MCF 10A (cell line): ENCODE measurements at regions of chr19 and their contacts with region 1.

Region 1: GRCh38 chr19:47619763-47620162 is 10.8 kb downstream of the BICRA start:
- DNase-seq: no peak
- H3K4me3 Mint-ChIP-seq: no peak overlapping the region
- H3K27ac Mint-ChIP-seq: no peak overlapping the region
- H3K4me1 Mint-ChIP-seq: peaks cover 13% of the 10 kb centered on the region
- H3K27me3 Mint-ChIP-seq: no peaks in the 10 kb centered on the region
- CTCF ChIP-seq: no peak

Region 2: GRCh38 chr19:47600246-47601179 is 19.2 kb before region 1 on chr19:
- CTCF ChIA-PET with region 1: no interaction called
- POLR2A ChIA-PET with region 1: interaction called, 10 read pairs
- intact Hi-C with region 1: no loop called
- DNase-seq: peak; percentile 100
- H3K4me3 Mint-ChIP-seq: peak overlapping the region; percentile 97
- H3K27ac Mint-ChIP-seq: peak overlapping the region; percentile 97
- H3K4me1 Mint-ChIP-seq: peaks cover 30% of the 10 kb centered on the region
- H3K27me3 Mint-ChIP-seq: no peaks in the 10 kb centered on the region
- CTCF ChIP-seq: no peak

Region 3: DNA sequence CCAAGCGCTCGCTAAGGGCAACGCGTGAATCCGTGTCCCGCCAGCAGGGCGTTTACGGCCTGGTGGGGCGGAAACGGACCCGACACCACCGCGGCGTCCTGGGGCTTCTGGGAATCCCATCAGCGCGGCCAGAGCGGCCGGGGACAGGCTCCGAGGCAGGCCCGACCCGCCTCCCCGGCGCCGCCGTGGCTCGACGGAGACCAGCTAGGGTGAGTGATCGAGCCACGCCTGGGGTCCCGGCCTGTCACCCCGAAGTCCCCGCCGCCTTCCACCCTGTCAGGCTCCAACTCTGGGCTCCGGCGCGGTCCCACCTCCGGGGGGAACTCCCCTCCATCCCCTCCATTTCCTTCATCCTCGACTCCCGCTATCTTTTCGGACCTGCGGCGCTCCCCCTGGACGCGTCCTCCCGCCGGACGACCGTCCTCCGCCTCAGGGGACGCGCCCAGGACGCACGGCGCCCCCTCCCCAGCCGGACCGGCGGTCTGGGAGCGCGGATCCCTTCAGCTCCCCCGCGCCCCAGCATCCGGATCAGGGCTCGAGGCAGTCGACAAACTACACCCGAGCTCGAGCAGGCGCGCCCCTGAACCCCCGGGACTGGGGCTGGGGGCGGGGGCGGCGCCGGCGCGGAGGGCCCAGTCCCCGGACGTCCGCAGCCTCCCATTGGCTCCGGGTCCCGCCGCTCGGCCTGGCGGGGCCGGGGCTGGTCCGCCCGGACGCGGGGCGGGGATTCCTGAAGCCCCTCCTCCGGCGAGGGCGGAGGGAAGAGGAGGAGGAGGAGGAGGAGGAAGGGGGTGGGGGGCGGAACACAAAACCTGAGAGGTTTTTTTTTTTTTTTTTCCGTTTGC is 11.5 kb before region 1 on chr19:
- CTCF ChIA-PET with region 1: no interaction called
- POLR2A ChIA-PET with region 1: interaction called, 17 read pairs
- intact Hi-C with region 1: no loop called
- DNase-seq: peak; percentile 96
- H3K4me3 Mint-ChIP-seq: peak overlapping the region; percentile 84
- H3K27ac Mint-ChIP-seq: peak overlapping the region; percentile 75
- H3K4me1 Mint-ChIP-seq: peaks cover 15% of the 10 kb centered on the region
- H3K27me3 Mint-ChIP-seq: no peaks in the 10 kb centered on the region
- CTCF ChIP-seq: no peak